ENCODE measurements at regions of chr1 and their contacts with region 1.

Region 1: DNA sequence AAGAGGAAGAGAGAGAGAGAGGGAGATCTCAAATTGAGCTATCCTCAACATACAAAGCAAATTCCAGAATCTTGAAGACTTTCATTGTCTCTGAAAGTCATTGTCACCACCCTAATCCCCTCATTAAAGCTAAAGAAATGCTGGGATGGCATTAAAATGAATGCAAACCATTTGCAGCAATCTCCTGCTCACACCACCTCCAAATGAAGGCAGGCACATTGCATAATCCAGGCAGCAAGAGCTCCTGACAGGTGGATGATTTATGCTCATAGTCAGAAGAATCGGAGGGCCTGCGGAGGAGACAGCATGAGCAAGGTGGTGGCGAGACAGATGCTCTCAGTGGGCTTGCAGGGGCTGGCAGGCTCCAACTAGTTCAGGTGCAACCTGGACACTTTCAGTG is 90.2 kb downstream of the ESRRG start:
- DNase-seq: no peak
- H3K4me3 ChIP-seq: no peak overlapping the region
- H3K27ac ChIP-seq: no peak overlapping the region
- H3K4me1 ChIP-seq: no peaks in the 10 kb centered on the region
- H3K27me3 ChIP-seq: no peaks in the 10 kb centered on the region
- CTCF ChIP-seq: no peak

Region 2: GRCh38 chr1:216983823-216984222 is 350.8 kb after region 1 on chr1:
- intact Hi-C with region 1: loop called (anchors 5 kb)
- DNase-seq: no peak
- H3K4me3 ChIP-seq: no peak overlapping the region
- H3K27ac ChIP-seq: no peak overlapping the region
- H3K4me1 ChIP-seq: no peaks in the 10 kb centered on the region
- H3K27me3 ChIP-seq: no peaks in the 10 kb centered on the region
- CTCF ChIP-seq: no peak

Measured in colonic mucosa (tissue), 4 donors.